Activated B cell treated with CpG ODN at 0.5 μM for 24 hours (primary cell): ENCODE measurements at regions of chr14 and their contacts with region 1.

Region 1: DNA sequence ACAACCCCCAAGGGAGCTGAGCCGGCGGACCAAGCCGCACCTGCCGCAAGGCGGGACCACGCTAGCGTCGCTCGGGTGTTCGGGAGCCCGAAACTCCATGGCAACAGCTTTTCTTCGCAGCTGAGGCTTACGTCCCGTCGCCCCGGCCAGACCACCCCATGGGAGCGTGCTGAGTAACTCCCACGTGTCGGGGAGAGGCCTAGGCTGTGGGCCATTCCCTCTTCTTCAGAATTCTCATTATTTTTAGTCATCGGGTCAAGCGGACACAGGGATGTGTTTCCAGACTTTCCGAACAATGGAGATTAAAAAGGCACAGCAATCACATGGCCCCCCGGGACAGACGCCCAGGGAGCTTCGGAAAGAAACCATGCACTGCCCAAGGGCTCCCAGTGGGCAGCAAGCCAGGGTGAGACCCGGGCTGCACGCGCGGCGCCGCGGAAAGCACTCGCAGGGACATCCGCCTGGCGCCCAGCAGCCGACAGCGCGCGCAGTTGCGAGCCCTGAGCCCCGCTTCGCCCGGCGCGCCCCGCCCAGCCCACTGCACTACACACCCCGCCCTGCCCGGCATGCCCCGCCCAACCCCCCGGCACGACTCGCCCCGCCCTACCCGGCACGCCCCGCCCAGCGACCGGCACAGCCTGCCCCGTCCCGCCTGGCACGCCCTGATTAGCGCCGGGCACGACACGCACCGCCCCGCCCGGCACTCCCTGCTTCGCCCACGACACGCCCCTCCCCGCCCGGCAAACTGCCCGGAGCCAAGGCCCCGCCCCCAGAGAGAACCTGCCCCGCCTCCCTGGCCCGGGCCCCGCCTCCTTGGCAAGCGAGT is 422 bp upstream of the AK7 start:
- DNase-seq: peak; percentile 100
- ATAC-seq: peak; percentile 93
- H3K4me3 Mint-ChIP-seq: peak overlapping the region; percentile 91
- H3K27ac Mint-ChIP-seq: peak overlapping the region; percentile 88
- H3K4me1 Mint-ChIP-seq: peaks cover 6% of the 10 kb centered on the region
- H3K27me3 Mint-ChIP-seq: peaks cover 3% of the 10 kb centered on the region
- CTCF ChIP-seq: no peak

Region 2: GRCh38 chr14:96362965-96363756 is 28.3 kb before region 1 on chr14 and contains the starts of genes ATG2B and GSKIP:
- CTCF ChIA-PET with region 1: interaction called, 3 read pairs
- POLR2A ChIA-PET with region 1: interaction called, 5 read pairs
- intact Hi-C with region 1: loop called (anchors 1 kb)
- DNase-seq: peak; percentile 97
- ATAC-seq: peak; percentile 85
- H3K4me3 Mint-ChIP-seq: peak within 1 kb of the TSS; percentile 89
- H3K27ac Mint-ChIP-seq: peak within 1 kb of the TSS; percentile 63
- H3K4me1 Mint-ChIP-seq: peaks cover 40% of the 10 kb centered on the region
- H3K27me3 Mint-ChIP-seq: no peaks in the 10 kb centered on the region
- CTCF ChIP-seq: no peak
- total RNA-seq, gene ATG2B: 19.4 and 21.0 TPM in 2 replicates
- total RNA-seq, gene GSKIP: 11.4 and 15.3 TPM in 2 replicates